CD4-positive, alpha-beta memory T cell (primary cell): ENCODE measurements at regions of chr11 and their contacts with region 1.

Region 1: GRCh38 chr11:116927163-116927974 is 89.9 kb upstream of the APOA1 start:
- DNase-seq: peak; percentile 45 to 78 (median 57)
- H3K4me3 ChIP-seq: peak overlapping the region in 1 of 2 donors; percentile 24
- H3K4me3 Mint-ChIP-seq: peak overlapping the region; percentile 47 to 88 (median 74)
- H3K27ac ChIP-seq: peak overlapping the region; percentile 87
- H3K27ac Mint-ChIP-seq: peak overlapping the region; percentile 92 to 99 (median 97)
- H3K4me1 ChIP-seq: peaks cover 93% of the 10 kb centered on the region
- H3K4me1 Mint-ChIP-seq: peaks cover 64 to 91% (median 76%) of the 10 kb centered on the region in 4 donors
- H3K27me3 ChIP-seq: no peaks in the 10 kb centered on the region
- H3K27me3 Mint-ChIP-seq: no peaks in the 10 kb centered on the region

Region 2: DNA sequence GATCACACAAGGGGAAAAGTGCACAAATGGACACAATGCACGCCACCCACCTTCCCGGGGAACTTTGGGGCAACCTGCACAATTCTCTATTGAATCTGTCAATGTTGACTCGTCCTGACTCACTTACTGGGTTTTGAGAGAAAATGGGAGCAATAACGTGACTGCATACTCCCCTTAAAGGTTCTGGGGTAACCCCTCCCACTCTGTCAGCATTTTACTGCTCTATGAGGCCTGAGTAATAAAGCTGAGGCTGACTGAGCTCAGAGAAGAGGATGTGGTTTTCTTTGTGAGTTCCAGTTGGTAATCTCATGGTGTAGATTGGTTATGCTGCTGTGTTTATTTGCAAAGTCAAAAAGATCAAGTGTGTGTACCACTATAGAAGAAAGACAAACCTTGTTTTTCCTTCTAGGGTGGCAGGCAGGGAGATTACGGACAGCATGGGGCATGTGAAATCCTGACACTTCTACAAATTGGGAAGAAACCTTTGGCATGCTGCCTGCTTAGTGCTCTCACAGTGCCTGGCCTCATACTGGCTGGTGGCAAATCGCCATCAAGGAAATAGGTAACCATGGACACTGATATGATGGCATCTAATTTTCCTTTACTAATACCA is 73.8 kb before region 1 on chr11:
- CTCF ChIA-PET with region 1: interaction called, 3 read pairs
- POLR2A ChIA-PET with region 1: interaction called, 15 read pairs
- intact Hi-C with region 1: no loop called
- DNase-seq: peak; percentile 81 to 91 (median 85)
- H3K4me3 ChIP-seq: peak overlapping the region; percentile 8 to 38
- H3K4me3 Mint-ChIP-seq: peak overlapping the region; percentile 53 to 90 (median 77)
- H3K27ac ChIP-seq: peak overlapping the region; percentile 52
- H3K27ac Mint-ChIP-seq: peak overlapping the region; percentile 83 to 98 (median 95)
- H3K4me1 ChIP-seq: peaks cover 81% of the 10 kb centered on the region
- H3K4me1 Mint-ChIP-seq: peaks cover 67 to 84% (median 74%) of the 10 kb centered on the region in 4 donors
- H3K27me3 ChIP-seq: no peaks in the 10 kb centered on the region
- H3K27me3 Mint-ChIP-seq: no peaks in the 10 kb centered on the region

Region 3: GRCh38 chr11:116901964-116902688 is 25.2 kb before region 1 on chr11:
- CTCF ChIA-PET with region 1: interaction called, 7 read pairs
- POLR2A ChIA-PET with region 1: interaction called, 11 read pairs
- intact Hi-C with region 1: loop called (anchors 1 kb)
- DNase-seq: no peak
- H3K4me3 ChIP-seq: no peak overlapping the region
- H3K4me3 Mint-ChIP-seq: peak overlapping the region in 6 of 8 donors; percentile 18 to 65 (median 36)
- H3K27ac ChIP-seq: no peak overlapping the region
- H3K27ac Mint-ChIP-seq: peak overlapping the region; percentile 1 to 90 (median 71)
- H3K4me1 ChIP-seq: peaks cover 26% of the 10 kb centered on the region
- H3K4me1 Mint-ChIP-seq: peaks cover 31 to 53% (median 40%) of the 10 kb centered on the region in 4 donors
- H3K27me3 ChIP-seq: no peaks in the 10 kb centered on the region
- H3K27me3 Mint-ChIP-seq: no peaks in the 10 kb centered on the region

Region 4: DNA sequence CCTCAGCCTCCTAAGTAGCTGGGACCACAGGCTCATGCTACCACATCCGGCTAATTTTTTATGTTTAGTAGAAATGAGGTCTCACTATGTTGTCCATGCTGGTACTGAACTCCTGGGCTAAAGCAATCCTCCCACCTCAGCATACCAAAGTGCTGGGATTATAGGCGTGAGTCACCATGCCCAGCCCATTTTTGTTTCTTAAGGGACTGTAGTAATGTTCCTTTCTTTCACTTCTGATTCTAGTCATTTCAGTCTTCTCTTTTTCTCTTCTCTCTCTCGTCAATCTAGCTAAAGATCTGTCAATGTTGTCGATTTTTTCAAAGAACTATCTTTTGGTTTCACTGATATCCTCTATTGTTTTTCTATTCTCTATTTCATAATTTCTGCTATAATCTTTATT is 21.0 kb after region 1 on chr11:
- CTCF ChIA-PET with region 1: interaction called, 4 read pairs
- POLR2A ChIA-PET with region 1: interaction called, 3 read pairs
- intact Hi-C with region 1: loop called (anchors 2 kb)
- DNase-seq: no peak
- H3K4me3 ChIP-seq: no peak overlapping the region
- H3K4me3 Mint-ChIP-seq: no peak overlapping the region
- H3K27ac ChIP-seq: no peak overlapping the region
- H3K27ac Mint-ChIP-seq: peak overlapping the region; percentile 1 to 70 (median 23)
- H3K4me1 ChIP-seq: peaks cover 9% of the 10 kb centered on the region
- H3K4me1 Mint-ChIP-seq: peaks cover 30 to 50% (median 38%) of the 10 kb centered on the region in 4 donors
- H3K27me3 ChIP-seq: no peaks in the 10 kb centered on the region
- H3K27me3 Mint-ChIP-seq: no peaks in the 10 kb centered on the region

Region 5: GRCh38 chr11:117020869-117021564 is 93.6 kb after region 1 on chr11:
- CTCF ChIA-PET with region 1: interaction called, 3 read pairs
- POLR2A ChIA-PET with region 1: interaction called, 4 read pairs
- intact Hi-C with region 1: loop called (anchors 5 kb)
- DNase-seq: no peak
- H3K4me3 ChIP-seq: no peak overlapping the region
- H3K4me3 Mint-ChIP-seq: peak overlapping the region in 6 of 8 donors; percentile 23 to 73 (median 48)
- H3K27ac ChIP-seq: no peak overlapping the region
- H3K27ac Mint-ChIP-seq: peak overlapping the region in 6 of 7 donors; percentile 23 to 74 (median 58)
- H3K4me1 ChIP-seq: peaks cover 73% of the 10 kb centered on the region
- H3K4me1 Mint-ChIP-seq: peaks cover 50 to 76% (median 63%) of the 10 kb centered on the region in 4 donors
- H3K27me3 ChIP-seq: no peaks in the 10 kb centered on the region
- H3K27me3 Mint-ChIP-seq: no peaks in the 10 kb centered on the region